ENCODE measurements at regions of chr10 and their contacts with region 1.

Region 1: DNA sequence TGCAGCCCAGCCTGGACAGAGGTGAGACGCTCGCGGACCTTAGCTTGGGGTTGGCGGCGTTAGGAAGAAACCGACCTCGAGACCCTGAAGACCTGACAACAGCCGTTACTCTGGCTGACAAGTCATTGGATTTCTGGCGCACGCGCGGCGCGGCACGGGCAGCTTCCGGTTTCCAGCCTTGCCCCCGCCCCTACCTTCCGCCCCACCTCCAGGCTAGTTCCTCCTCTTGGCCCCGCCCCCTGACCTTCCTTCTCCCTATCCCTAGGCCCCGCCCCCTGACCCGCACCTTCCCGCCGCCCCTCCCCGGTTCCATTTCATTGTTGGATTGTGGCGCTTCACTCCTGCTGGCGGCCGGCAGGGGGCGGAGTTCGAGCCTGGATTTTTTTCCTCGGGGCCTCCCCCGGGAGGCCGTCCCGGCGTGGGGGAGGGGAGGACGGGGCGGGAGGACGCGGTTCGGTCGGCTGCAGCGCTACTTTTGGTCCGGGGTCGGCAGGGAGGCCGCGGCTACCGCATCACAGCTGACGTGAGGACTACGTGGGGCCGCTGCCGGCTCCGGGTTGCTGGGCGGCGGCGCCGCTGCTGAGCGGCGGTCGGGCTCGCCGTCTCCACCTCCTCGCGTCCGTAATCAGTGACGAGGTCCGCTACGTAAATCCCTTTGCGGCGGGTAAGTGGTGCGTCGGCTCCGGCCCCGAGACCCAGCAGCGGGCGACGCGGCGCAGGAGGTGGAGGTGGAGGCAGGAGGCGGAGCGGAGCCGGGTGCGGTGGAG is at the start of gene CREM:
- DNase-seq: peak; percentile 99 to 100 (median 99)
- ATAC-seq: peak; percentile 84
- H3K4me3 ChIP-seq: peak within 1 kb of the TSS; percentile 73 to 93
- H3K4me3 Mint-ChIP-seq: peak within 1 kb of the TSS; percentile 90
- H3K27ac ChIP-seq: peak within 1 kb of the TSS; percentile 98 to 100
- H3K27ac Mint-ChIP-seq: peak within 1 kb of the TSS; percentile 98
- H3K4me1 ChIP-seq: peaks cover 36% of the 10 kb centered on the region
- H3K4me1 Mint-ChIP-seq: peaks cover 40% of the 10 kb centered on the region
- H3K27me3 ChIP-seq: no peaks in the 10 kb centered on the region
- H3K27me3 Mint-ChIP-seq: no peaks in the 10 kb centered on the region
- CTCF ChIP-seq: peak; percentile 67
- total RNA-seq, gene CREM: 129 to 142 TPM

Region 2: DNA sequence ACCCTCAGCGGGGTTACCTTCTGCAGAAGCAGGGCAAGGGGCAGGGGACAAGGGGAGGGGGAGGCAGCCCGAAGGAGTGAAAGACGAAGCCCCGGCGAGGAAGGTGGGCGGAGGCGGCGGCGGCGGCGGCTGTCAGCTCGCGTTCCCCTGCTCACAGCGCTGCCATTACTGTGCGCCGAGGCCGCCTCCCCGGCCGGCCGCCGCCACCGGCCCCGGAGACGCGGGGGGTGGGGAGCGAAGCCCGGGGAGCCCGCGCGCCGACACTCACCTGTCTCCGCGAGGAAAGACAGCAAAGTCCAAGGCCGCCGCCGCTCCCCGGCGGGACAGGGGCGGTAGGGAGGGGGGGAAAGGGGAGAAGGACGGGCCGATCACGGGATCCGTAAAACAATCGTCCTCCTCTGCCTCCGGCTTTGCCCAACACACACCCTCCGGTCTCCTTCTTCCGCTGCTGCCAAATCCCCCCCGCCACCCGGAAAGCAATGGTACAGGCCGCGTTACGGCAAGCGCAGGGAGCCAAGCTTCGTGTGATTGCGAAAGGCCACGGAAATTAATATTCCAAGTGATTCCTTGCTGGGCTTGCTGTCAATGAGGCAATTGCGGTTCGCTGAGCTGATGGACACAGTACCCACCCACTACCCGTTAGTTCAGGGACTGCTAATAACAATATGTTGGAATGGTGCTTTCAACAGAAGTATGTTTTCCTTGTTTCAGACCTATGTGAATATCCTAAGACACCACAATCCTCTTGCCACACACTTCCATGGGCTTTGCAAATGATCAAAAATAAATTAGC is 36.4 kb before region 1 on chr10 and contains the start of gene CUL2:
- CTCF ChIA-PET with region 1: interaction called, 3 read pairs
- POLR2A ChIA-PET with region 1: interaction called, 30 read pairs
- intact Hi-C with region 1: loop called (anchors 1 kb)
- DNase-seq: peak; percentile 85 to 96 (median 92)
- ATAC-seq: peak; percentile 92
- H3K4me3 ChIP-seq: peak within 1 kb of the TSS; percentile 86 to 97
- H3K4me3 Mint-ChIP-seq: peak within 1 kb of the TSS; percentile 97
- H3K27ac ChIP-seq: peak within 1 kb of the TSS; percentile 94 to 99
- H3K27ac Mint-ChIP-seq: peak within 1 kb of the TSS; percentile 98
- H3K4me1 ChIP-seq: peaks cover 38% of the 10 kb centered on the region
- H3K4me1 Mint-ChIP-seq: peaks cover 50% of the 10 kb centered on the region
- H3K27me3 ChIP-seq: peaks cover 0 to 2% of the 10 kb centered on the region in 2 experiments
- H3K27me3 Mint-ChIP-seq: no peaks in the 10 kb centered on the region
- CTCF ChIP-seq: no peak
- total RNA-seq, gene CUL2: 43.8 to 47.1 TPM

Region 3: DNA sequence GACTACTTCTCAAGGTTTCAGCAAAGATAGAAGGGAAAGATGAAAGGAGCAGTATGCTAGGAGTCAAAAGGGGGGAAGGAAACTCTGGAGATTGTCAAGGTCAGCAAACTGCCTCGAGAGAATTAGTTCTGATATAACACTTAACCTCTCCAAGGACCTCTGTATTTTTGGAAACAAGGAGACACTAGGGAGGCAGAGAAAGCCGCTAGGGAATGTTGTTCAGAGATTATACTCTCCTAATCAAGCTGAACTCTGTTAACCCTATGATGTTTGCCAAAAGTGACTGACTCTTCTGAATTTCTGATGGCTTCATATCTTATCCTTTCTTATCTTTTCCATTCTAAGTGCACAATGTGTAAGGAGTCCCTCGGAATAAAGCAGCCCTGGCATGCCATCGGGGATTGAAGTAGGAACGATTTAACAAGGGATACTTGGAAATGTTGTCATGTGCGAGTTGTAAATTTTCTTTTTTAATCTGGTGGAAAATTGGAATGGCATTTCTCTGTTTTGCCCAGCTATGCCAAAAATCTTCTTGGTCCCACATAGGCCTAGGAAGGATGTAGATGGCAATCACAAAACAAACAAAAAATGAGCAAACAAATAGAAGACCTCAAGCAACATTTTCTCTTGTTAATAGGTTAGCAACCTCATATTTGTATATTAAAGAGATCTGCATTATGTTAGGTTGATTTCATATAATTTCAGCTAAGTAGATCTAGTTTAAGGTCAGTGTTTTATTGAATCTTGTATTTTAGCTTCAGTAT is 27.2 kb after region 1 on chr10:
- CTCF ChIA-PET with region 1: interaction called, 3 read pairs
- POLR2A ChIA-PET with region 1: interaction called, 6 read pairs
- intact Hi-C with region 1: loop called in 1 of 2 experiments (anchors 2 kb)
- DNase-seq: no peak
- ATAC-seq: no peak
- H3K4me3 ChIP-seq: no peak overlapping the region
- H3K4me3 Mint-ChIP-seq: no peak overlapping the region
- H3K27ac ChIP-seq: no peak overlapping the region
- H3K27ac Mint-ChIP-seq: no peak overlapping the region
- H3K4me1 ChIP-seq: peaks cover 15% of the 10 kb centered on the region
- H3K4me1 Mint-ChIP-seq: peaks cover 21% of the 10 kb centered on the region
- H3K27me3 ChIP-seq: no peaks in the 10 kb centered on the region
- H3K27me3 Mint-ChIP-seq: no peaks in the 10 kb centered on the region
- CTCF ChIP-seq: no peak

Region 4: GRCh38 chr10:35276889-35277288 is 150.2 kb after region 1 on chr10:
- CTCF ChIA-PET with region 1: no interaction called
- POLR2A ChIA-PET with region 1: no interaction called
- intact Hi-C with region 1: no loop called
- DNase-seq: no peak
- ATAC-seq: no peak
- H3K4me3 ChIP-seq: no peak overlapping the region
- H3K4me3 Mint-ChIP-seq: no peak overlapping the region
- H3K27ac ChIP-seq: no peak overlapping the region
- H3K27ac Mint-ChIP-seq: no peak overlapping the region
- H3K4me1 ChIP-seq: no peaks in the 10 kb centered on the region
- H3K4me1 Mint-ChIP-seq: no peaks in the 10 kb centered on the region
- H3K27me3 ChIP-seq: no peaks in the 10 kb centered on the region
- H3K27me3 Mint-ChIP-seq: peaks cover 3% of the 10 kb centered on the region
- CTCF ChIP-seq: no peak

Region 5: GRCh38 chr10:35336084-35336831 is 209.5 kb after region 1 on chr10 and contains the start of gene CCNY:
- CTCF ChIA-PET with region 1: no interaction called
- POLR2A ChIA-PET with region 1: interaction called, 3 read pairs
- intact Hi-C with region 1: loop called (anchors 1 kb)
- DNase-seq: peak; percentile 56 to 83 (median 78)
- ATAC-seq: peak; percentile 86
- H3K4me3 ChIP-seq: peak within 1 kb of the TSS; percentile 77 to 78
- H3K4me3 Mint-ChIP-seq: peak within 1 kb of the TSS; percentile 88
- H3K27ac ChIP-seq: peak within 1 kb of the TSS; percentile 60 to 61
- H3K27ac Mint-ChIP-seq: peak within 1 kb of the TSS; percentile 86
- H3K4me1 ChIP-seq: peaks cover 52% of the 10 kb centered on the region
- H3K4me1 Mint-ChIP-seq: peaks cover 71% of the 10 kb centered on the region
- H3K27me3 ChIP-seq: no peaks in the 10 kb centered on the region
- H3K27me3 Mint-ChIP-seq: no peaks in the 10 kb centered on the region
- CTCF ChIP-seq: no peak
- total RNA-seq, gene CCNY: 75.3 to 77.3 TPM

Region 6: DNA sequence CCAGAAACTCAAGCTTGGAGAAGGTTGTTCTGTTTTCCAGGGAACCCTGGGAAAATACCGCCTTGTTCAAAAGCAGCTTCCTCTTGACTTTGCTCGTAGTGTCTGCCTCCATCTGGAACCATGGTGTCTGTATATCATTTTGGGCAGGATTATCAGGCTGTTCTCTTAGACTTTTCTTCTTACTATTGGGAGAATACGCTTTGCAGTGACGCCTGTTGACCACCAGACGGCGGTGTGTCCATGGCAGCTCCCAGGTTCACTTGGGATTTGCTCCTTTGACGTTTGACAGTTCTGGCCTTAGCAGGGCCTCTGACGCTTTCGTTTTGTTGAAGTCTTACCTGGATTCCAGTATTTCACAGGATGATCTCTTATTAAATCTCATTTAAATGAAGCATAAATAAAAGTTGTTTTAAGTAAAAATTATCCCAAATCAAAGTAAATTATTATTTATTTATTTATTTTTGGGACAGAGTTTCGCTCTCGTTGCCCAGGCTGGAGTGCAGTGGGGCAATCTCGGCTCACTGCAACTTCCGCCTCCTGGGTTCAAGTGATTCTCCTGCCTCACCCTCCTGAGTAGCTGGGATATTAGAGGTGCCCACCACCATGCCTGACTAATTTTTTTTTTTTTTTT is 436.7 kb after region 1 on chr10:
- CTCF ChIA-PET with region 1: no interaction called
- POLR2A ChIA-PET with region 1: no interaction called
- intact Hi-C with region 1: loop called (anchors 5 kb)
- DNase-seq: peak in 6 of 9 experiments; percentile 26 to 66 (median 42)
- ATAC-seq: peak; percentile 63
- H3K4me3 ChIP-seq: no peak overlapping the region
- H3K4me3 Mint-ChIP-seq: no peak overlapping the region
- H3K27ac ChIP-seq: no peak overlapping the region
- H3K27ac Mint-ChIP-seq: peak overlapping the region; percentile 16
- H3K4me1 ChIP-seq: peaks cover 7% of the 10 kb centered on the region
- H3K4me1 Mint-ChIP-seq: peaks cover 6% of the 10 kb centered on the region
- H3K27me3 ChIP-seq: no peaks in the 10 kb centered on the region
- H3K27me3 Mint-ChIP-seq: no peaks in the 10 kb centered on the region
- CTCF ChIP-seq: peak; percentile 88

Region 7: DNA sequence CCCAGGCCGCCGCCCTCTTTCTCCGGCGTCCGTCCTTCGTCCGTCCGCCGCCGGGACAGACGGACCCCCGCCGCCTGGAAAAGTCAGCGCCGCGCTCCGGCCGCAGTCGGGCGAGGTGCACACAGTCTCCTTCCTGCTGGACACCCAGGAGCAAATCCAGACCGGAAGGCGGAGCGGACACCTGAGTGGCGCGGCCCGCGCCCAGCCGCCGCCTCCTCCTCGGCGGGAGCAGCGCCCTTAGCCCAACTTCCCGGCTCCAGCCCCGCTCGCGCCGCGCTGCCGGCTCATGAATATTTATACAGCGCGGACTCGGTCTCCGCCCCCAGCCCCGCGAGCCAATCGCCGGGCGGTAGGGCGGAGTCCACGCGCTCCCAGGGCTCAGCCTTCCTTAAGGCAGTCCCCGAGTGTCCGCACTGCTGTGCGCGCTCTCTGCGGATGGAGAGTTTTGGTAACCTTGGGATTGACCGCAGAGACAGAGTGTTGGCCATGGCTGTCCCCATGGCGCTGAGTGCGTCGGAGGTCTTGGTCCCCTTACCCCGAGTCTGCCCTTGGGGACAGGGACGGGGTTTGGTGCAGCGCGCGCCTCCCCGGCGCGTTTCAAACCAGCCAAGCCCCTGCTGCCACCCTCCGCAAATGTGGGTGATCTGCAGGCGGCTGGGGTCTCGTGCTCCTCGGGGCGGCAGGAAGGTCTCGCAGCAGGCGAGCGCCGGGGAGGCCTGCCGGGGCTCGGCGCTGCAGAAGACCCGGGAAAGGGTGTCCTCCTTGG is 515.5 kb after region 1 on chr10 and contains the start of gene FZD8:
- CTCF ChIA-PET with region 1: no interaction called
- POLR2A ChIA-PET with region 1: no interaction called
- intact Hi-C with region 1: loop called (anchors 2 to 10 kb)
- DNase-seq: peak; percentile 24 to 79 (median 60)
- ATAC-seq: peak; percentile 83
- H3K4me3 ChIP-seq: peak within 1 kb of the TSS; percentile 56 to 80
- H3K4me3 Mint-ChIP-seq: peak within 1 kb of the TSS; percentile 85
- H3K27ac ChIP-seq: no peak within 1 kb of the TSS
- H3K27ac Mint-ChIP-seq: no peak within 1 kb of the TSS
- H3K4me1 ChIP-seq: peaks cover 12% of the 10 kb centered on the region
- H3K4me1 Mint-ChIP-seq: peaks cover 31% of the 10 kb centered on the region
- H3K27me3 ChIP-seq: peaks cover 5 to 9% of the 10 kb centered on the region in 2 experiments
- H3K27me3 Mint-ChIP-seq: peaks cover 39% of the 10 kb centered on the region
- CTCF ChIP-seq: no peak
- total RNA-seq, gene FZD8: 1.5 to 1.7 TPM

Measured in CD8-positive, alpha-beta T cell (primary cell).